MCF 10A (cell line): ENCODE measurements at regions of chr13 and their contacts with region 1.

Region 1: GRCh38 chr13:26698392-26699196 is 62.0 kb downstream of the GPR12 start:
- DNase-seq: peak; percentile 79
- H3K4me3 Mint-ChIP-seq: no peak overlapping the region
- H3K27ac Mint-ChIP-seq: no peak overlapping the region
- H3K4me1 Mint-ChIP-seq: peaks cover 11% of the 10 kb centered on the region
- H3K27me3 Mint-ChIP-seq: peaks cover 17% of the 10 kb centered on the region
- CTCF ChIP-seq: peak; percentile 94

Region 2: DNA sequence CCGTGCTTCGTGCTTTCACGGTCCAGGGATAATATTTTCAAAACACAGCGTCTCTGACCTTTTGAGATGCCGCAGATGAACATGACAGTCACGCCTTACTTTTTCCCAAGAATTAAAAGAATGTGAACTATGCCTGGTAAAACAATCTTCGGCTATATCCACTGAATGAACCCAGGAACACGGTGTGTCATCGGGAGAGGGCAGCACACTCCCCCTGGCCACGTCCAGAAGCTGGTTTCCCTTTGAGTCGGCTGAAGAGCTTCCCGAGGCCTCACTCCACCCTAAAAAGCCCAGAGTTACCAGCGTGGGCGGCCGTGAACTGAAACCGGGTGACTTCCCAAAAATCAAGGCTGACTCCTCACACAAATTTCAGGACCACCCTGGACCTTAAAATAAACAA is 623.9 kb before region 1 on chr13:
- CTCF ChIA-PET with region 1: interaction called, 5 read pairs
- POLR2A ChIA-PET with region 1: no interaction called
- intact Hi-C with region 1: loop called (anchors 2 kb)
- DNase-seq: peak; percentile 46
- H3K4me3 Mint-ChIP-seq: peak overlapping the region; percentile 40
- H3K27ac Mint-ChIP-seq: peak overlapping the region; percentile 51
- H3K4me1 Mint-ChIP-seq: no peaks in the 10 kb centered on the region
- H3K27me3 Mint-ChIP-seq: no peaks in the 10 kb centered on the region
- CTCF ChIP-seq: peak; percentile 8

Region 3: GRCh38 chr13:26253787-26254582 is 444.6 kb before region 1 on chr13 and contains the start of gene CDK8:
- CTCF ChIA-PET with region 1: interaction called, 4 read pairs
- POLR2A ChIA-PET with region 1: interaction called, 3 read pairs
- intact Hi-C with region 1: loop called (anchors 1 kb)
- DNase-seq: peak; percentile 90
- H3K4me3 Mint-ChIP-seq: peak within 1 kb of the TSS; percentile 80
- H3K27ac Mint-ChIP-seq: peak within 1 kb of the TSS; percentile 67
- H3K4me1 Mint-ChIP-seq: peaks cover 18% of the 10 kb centered on the region
- H3K27me3 Mint-ChIP-seq: no peaks in the 10 kb centered on the region
- CTCF ChIP-seq: no peak
- total RNA-seq, gene CDK8: 20.6 and 22.2 TPM in 2 replicates

Region 4: GRCh38 chr13:26377038-26377437 is 321.6 kb before region 1 on chr13:
- CTCF ChIA-PET with region 1: no interaction called
- POLR2A ChIA-PET with region 1: no interaction called
- intact Hi-C with region 1: loop called (anchors 1 kb)
- DNase-seq: peak; percentile 42
- H3K4me3 Mint-ChIP-seq: no peak overlapping the region
- H3K27ac Mint-ChIP-seq: no peak overlapping the region
- H3K4me1 Mint-ChIP-seq: peaks cover 4% of the 10 kb centered on the region
- H3K27me3 Mint-ChIP-seq: no peaks in the 10 kb centered on the region
- CTCF ChIP-seq: peak; percentile 10

Region 5: GRCh38 chr13:26482451-26483197 is 216.0 kb before region 1 on chr13:
- CTCF ChIA-PET with region 1: interaction called, 46 read pairs
- POLR2A ChIA-PET with region 1: no interaction called
- intact Hi-C with region 1: loop called (anchors 1 kb)
- DNase-seq: peak; percentile 84
- H3K4me3 Mint-ChIP-seq: peak overlapping the region; percentile 30
- H3K27ac Mint-ChIP-seq: no peak overlapping the region
- H3K4me1 Mint-ChIP-seq: no peaks in the 10 kb centered on the region
- H3K27me3 Mint-ChIP-seq: no peaks in the 10 kb centered on the region
- CTCF ChIP-seq: peak; percentile 74

Region 6: GRCh38 chr13:26498656-26499591 is 199.7 kb before region 1 on chr13:
- CTCF ChIA-PET with region 1: interaction called, 17 read pairs
- POLR2A ChIA-PET with region 1: no interaction called
- intact Hi-C with region 1: loop called (anchors 1 kb)
- DNase-seq: no peak
- H3K4me3 Mint-ChIP-seq: no peak overlapping the region
- H3K27ac Mint-ChIP-seq: no peak overlapping the region
- H3K4me1 Mint-ChIP-seq: peaks cover 17% of the 10 kb centered on the region
- H3K27me3 Mint-ChIP-seq: no peaks in the 10 kb centered on the region
- CTCF ChIP-seq: no peak

Region 7: GRCh38 chr13:26557393-26558023 is 141.1 kb before region 1 on chr13 and contains the start of gene WASF3:
- CTCF ChIA-PET with region 1: interaction called, 4 read pairs
- POLR2A ChIA-PET with region 1: interaction called, 8 read pairs
- intact Hi-C with region 1: loop called (anchors 5 kb)
- DNase-seq: peak; percentile 93
- H3K4me3 Mint-ChIP-seq: peak within 1 kb of the TSS; percentile 79
- H3K27ac Mint-ChIP-seq: no peak within 1 kb of the TSS
- H3K4me1 Mint-ChIP-seq: peaks cover 15% of the 10 kb centered on the region
- H3K27me3 Mint-ChIP-seq: peaks cover 11% of the 10 kb centered on the region
- CTCF ChIP-seq: no peak
- total RNA-seq, gene WASF3: 21.8 and 24.0 TPM in 2 replicates